Natural killer cell (primary cell): ENCODE measurements at regions of chr3 and their contacts with region 1.

Region 1: DNA sequence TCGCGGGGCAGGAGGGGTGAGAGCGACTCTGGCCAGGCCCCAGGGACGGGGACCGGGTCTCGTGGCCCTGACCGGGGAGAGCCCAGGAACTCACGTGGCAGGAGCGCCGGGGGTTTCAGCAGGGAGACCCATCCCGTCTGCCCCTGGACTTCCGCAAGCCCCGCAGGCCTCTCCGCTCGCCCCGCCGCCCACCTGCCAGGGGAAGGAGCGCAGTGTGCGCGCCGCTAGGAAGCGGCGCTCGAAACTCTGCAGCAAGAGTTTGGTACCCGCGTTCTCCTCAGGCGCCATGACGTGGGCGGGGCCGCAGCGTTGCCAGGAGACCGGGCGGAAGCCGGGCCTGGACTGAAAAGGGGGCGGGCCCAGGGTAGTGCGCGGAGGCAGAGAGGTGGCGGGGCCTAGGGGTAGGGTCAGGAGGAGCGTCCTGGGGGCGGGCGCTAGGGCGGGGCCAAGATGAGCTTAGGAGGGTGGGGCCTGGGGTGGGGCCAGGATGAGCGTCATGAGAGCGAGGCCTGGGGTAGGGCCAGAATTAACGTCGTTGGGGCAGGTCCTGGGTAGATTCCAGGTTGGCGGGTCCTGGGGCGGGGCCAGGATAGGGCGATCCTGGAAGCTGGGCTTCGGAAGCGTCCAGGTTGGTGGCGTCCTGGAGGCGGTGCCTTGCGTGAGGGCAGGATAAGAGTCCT is 29.7 kb downstream of the ALG1L2 start:
- DNase-seq: peak; percentile 96 to 99
- ATAC-seq: peak; percentile 100
- H3K4me3 ChIP-seq: peak overlapping the region; percentile 72
- H3K4me3 Mint-ChIP-seq: peak overlapping the region; percentile 94
- H3K27ac ChIP-seq: peak overlapping the region; percentile 85
- H3K27ac Mint-ChIP-seq: peak overlapping the region; percentile 93 to 98
- H3K4me1 ChIP-seq: peaks cover 10% of the 10 kb centered on the region
- H3K4me1 Mint-ChIP-seq: peaks cover 0 to 15% of the 10 kb centered on the region in 2 donors
- H3K27me3 ChIP-seq: no peaks in the 10 kb centered on the region
- H3K27me3 Mint-ChIP-seq: no peaks in the 10 kb centered on the region
- CTCF ChIP-seq: no peak

Region 2: DNA sequence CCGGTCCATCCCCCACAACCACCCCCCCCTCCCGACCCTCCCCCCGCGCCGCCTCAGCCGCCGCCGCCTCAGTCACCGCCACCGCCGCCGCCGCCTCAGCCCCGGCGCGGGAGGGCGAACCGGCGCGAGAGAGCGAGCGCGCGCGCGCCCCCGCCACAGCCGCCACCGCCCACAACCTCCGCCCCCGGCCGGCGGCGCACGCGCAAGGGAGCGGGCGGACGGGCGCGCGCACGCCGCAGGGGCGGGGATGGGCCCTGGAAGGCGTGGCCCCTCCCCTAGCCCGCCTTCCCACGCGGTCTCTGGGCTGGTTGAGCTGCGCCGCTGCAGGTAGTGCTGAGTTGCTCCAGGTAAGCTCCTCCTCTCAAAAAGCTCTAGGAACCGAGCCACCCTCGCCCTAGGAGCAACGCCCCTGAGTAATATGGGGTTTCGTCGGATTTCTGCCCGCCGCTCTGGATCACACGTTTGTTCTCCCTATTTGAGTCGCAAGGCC is 217.7 kb before region 1 on chr3 and contains the start of gene TMCC1:
- intact Hi-C with region 1: loop called (anchors 5 kb)
- DNase-seq: peak; percentile 88 to 97
- ATAC-seq: peak; percentile 90 to 97 (median 92)
- H3K4me3 ChIP-seq: peak within 1 kb of the TSS; percentile 65
- H3K4me3 Mint-ChIP-seq: peak within 1 kb of the TSS; percentile 89
- H3K27ac ChIP-seq: peak within 1 kb of the TSS; percentile 80
- H3K27ac Mint-ChIP-seq: peak within 1 kb of the TSS; percentile 81 to 84
- H3K4me1 ChIP-seq: peaks cover 16% of the 10 kb centered on the region
- H3K4me1 Mint-ChIP-seq: peaks cover 37 to 39% of the 10 kb centered on the region in 2 donors
- H3K27me3 ChIP-seq: no peaks in the 10 kb centered on the region
- H3K27me3 Mint-ChIP-seq: no peaks in the 10 kb centered on the region
- CTCF ChIP-seq: no peak
- total RNA-seq, gene TMCC1: 26.4 to 36.7 (median 31.7) TPM

Region 3: GRCh38 chr3:129961134-129961541 is 150.2 kb before region 1 on chr3:
- intact Hi-C with region 1: no loop called
- DNase-seq: no peak
- ATAC-seq: no peak
- H3K4me3 ChIP-seq: no peak overlapping the region
- H3K4me3 Mint-ChIP-seq: no peak overlapping the region
- H3K27ac ChIP-seq: no peak overlapping the region
- H3K27ac Mint-ChIP-seq: no peak overlapping the region
- H3K4me1 ChIP-seq: no peaks in the 10 kb centered on the region
- H3K4me1 Mint-ChIP-seq: no peaks in the 10 kb centered on the region
- H3K27me3 ChIP-seq: no peaks in the 10 kb centered on the region
- H3K27me3 Mint-ChIP-seq: peaks cover 0 to 6% of the 10 kb centered on the region in 2 donors
- CTCF ChIP-seq: no peak

Region 4: DNA sequence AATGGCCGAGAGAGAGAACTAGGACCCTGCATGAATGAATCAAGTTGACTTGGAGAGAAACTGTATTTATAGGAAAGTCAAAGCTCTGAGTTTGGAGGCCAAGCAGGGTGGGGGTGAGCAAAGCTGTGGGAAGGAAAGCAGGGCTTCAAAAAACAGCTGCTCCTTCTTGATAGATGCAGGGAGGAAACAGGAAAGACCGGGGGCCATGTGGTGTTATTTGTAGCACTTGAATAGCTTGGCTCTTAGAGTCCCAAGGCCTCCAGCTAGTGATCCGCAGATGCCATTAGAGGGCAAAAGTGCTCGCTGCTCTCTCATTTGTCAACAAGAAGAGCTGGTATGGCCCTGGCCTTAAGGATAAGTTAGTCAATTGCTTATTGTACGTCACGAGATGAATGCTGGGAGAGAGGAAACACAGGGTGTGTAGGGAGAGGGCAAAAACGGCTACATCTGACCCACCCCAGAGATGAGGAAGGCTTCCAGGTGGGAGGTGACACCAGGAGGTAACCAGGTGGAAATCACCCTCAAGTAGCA is 29.9 kb before region 1 on chr3 and contains the start of gene ALG1L2:
- intact Hi-C with region 1: no loop called
- DNase-seq: no peak
- ATAC-seq: no peak
- H3K4me3 ChIP-seq: no peak within 1 kb of the TSS
- H3K4me3 Mint-ChIP-seq: no peak within 1 kb of the TSS
- H3K27ac ChIP-seq: no peak within 1 kb of the TSS
- H3K27ac Mint-ChIP-seq: no peak within 1 kb of the TSS
- H3K4me1 ChIP-seq: no peaks in the 10 kb centered on the region
- H3K4me1 Mint-ChIP-seq: peaks cover 0 to 8% of the 10 kb centered on the region in 2 donors
- H3K27me3 ChIP-seq: no peaks in the 10 kb centered on the region
- H3K27me3 Mint-ChIP-seq: peaks cover 19 to 32% of the 10 kb centered on the region in 2 donors
- CTCF ChIP-seq: no peak
- total RNA-seq, gene ALG1L2: 1.3 to 1.7 TPM in 2 of 3 donors, not detected in the other

Region 5: GRCh38 chr3:130658678-130659077 is 547.4 kb after region 1 on chr3:
- intact Hi-C with region 1: no loop called
- DNase-seq: no peak
- ATAC-seq: no peak
- H3K4me3 ChIP-seq: no peak overlapping the region
- H3K4me3 Mint-ChIP-seq: no peak overlapping the region
- H3K27ac ChIP-seq: no peak overlapping the region
- H3K27ac Mint-ChIP-seq: no peak overlapping the region
- H3K4me1 ChIP-seq: no peaks in the 10 kb centered on the region
- H3K4me1 Mint-ChIP-seq: no peaks in the 10 kb centered on the region
- H3K27me3 ChIP-seq: no peaks in the 10 kb centered on the region
- H3K27me3 Mint-ChIP-seq: no peaks in the 10 kb centered on the region
- CTCF ChIP-seq: no peak